ENCODE measurements at regions of chr2 and their contacts with region 1.

Region 1: DNA sequence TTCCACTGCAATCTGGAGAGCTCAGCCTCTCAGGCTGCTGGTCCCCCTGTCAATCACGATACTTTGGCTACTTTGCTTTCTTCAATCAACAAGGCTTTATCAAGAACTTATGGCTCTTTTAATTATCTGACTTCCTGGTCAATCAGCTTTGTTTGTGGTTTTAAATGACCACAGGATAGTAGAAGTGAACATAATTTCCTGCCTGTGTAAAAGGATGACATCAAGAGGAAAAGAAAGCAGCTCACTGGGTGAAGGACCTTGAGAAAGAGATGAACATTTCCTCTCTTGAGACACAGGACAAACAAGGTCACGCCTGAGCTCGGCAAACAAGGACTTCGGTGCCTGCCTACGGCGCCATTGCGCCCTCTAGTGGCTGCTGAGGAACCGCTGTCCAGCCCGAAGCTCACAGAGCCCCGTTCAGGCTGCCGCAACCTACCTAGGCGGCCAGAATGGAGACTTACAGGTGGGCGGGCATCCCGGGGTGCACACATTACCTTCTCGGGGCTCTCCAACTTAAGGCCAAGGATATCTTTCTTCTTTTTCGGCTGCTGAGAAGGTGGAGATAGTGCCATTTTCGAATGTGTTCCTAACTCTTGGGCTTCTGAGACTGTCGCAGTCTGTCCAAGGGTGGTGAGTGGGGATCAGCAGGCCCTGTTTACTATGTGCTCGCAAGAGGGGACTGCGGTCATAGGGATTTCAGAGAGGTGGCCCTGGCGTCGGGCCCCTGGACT is 54.0 kb downstream of the IL1RL2 start:
- DNase-seq: peak; percentile 94
- ATAC-seq: peak; percentile 94
- H3K4me3 Mint-ChIP-seq: peak overlapping the region; percentile 15
- H3K27ac Mint-ChIP-seq: peak overlapping the region; percentile 84
- H3K4me1 Mint-ChIP-seq: peaks cover 42% of the 10 kb centered on the region
- H3K27me3 Mint-ChIP-seq: no peaks in the 10 kb centered on the region

Region 2: GRCh38 chr2:101251844-101252407 is 988.9 kb before region 1 on chr2:
- CTCF ChIA-PET with region 1: no interaction called
- POLR2A ChIA-PET with region 1: no interaction called
- intact Hi-C with region 1: no loop called
- DNase-seq: peak; percentile 36
- ATAC-seq: peak; percentile 50
- H3K4me3 Mint-ChIP-seq: peak overlapping the region; percentile 90
- H3K27ac Mint-ChIP-seq: peak overlapping the region; percentile 88
- H3K4me1 Mint-ChIP-seq: peaks cover 38% of the 10 kb centered on the region
- H3K27me3 Mint-ChIP-seq: no peaks in the 10 kb centered on the region

Region 3: DNA sequence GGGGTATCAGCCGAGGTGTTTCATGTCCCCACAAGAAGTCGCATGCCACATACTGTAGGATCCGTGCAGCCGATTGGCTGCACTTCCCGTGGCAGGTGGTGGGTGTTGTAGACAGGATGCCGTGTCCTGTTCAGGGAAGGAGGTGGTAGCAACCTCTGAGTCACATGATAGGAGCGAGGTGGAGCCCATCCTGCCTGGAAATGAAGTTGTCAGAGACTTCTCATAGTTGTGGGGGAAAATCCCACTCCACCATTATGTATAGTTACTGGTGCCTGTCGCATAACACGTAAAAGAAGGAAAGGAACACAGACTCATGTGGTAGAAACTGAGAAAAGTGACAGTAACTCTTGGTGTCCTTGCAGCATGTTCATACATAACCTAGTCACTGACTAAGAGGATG is 340.4 kb before region 1 on chr2:
- CTCF ChIA-PET with region 1: interaction called, 11 read pairs
- POLR2A ChIA-PET with region 1: no interaction called
- intact Hi-C with region 1: no loop called
- DNase-seq: peak; percentile 82
- ATAC-seq: peak; percentile 93
- H3K4me3 Mint-ChIP-seq: peak overlapping the region; percentile 24
- H3K27ac Mint-ChIP-seq: peak overlapping the region; percentile 90
- H3K4me1 Mint-ChIP-seq: peaks cover 38% of the 10 kb centered on the region
- H3K27me3 Mint-ChIP-seq: peaks cover 10% of the 10 kb centered on the region

Region 4: GRCh38 chr2:102033031-102033749 is 207.6 kb before region 1 on chr2:
- CTCF ChIA-PET with region 1: interaction called, 14 read pairs
- POLR2A ChIA-PET with region 1: no interaction called
- intact Hi-C with region 1: no loop called
- DNase-seq: peak; percentile 41
- ATAC-seq: peak; percentile 66
- H3K4me3 Mint-ChIP-seq: no peak overlapping the region
- H3K27ac Mint-ChIP-seq: peak overlapping the region; percentile 62
- H3K4me1 Mint-ChIP-seq: peaks cover 40% of the 10 kb centered on the region
- H3K27me3 Mint-ChIP-seq: no peaks in the 10 kb centered on the region

Region 5: DNA sequence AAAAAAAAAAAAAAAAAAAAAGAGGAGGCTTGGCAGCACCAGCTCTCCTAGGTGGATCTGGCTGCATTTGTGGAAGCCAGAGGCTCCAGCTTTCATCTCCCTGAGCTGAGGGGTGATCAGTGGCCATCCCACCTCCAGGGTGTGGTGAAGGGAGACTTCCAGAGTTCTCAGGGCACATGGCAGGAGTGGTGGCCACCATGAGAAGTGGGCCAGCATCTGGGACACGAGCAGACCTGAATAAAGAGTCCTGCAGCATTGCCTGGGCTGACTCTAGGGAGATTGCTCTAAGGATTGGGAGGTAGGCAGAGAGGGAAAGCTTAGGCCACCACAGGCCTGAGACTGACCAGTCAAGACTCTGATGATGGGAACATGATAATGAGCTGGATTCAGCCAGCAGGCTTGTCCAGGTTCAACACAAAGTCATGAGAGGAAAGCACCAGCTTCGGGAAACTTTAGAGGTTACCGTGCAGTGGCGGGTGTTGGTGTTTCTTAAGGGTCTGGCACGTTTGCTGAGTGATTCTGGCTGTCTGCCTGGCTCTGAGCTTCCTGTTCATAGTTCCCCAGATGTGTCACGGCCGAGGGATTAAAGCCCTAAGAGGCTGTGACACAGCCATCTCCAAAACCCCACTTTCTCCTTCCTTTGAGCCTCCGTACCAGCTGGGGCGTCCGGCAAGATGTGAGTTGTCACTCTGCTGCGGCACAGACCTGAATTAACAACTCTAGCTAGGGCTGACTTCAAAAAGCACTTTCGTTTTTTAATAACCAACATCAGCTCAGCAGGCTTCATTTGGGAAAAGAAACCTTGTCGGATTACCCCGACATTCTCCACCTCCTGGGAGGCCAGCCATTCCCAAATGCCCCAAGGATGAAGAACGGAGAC is 136.6 kb before region 1 on chr2:
- CTCF ChIA-PET with region 1: interaction called, 11 read pairs
- POLR2A ChIA-PET with region 1: interaction called, 3 read pairs
- intact Hi-C with region 1: no loop called
- DNase-seq: peak; percentile 92
- ATAC-seq: peak; percentile 78
- H3K4me3 Mint-ChIP-seq: peak overlapping the region; percentile 80
- H3K27ac Mint-ChIP-seq: peak overlapping the region; percentile 84
- H3K4me1 Mint-ChIP-seq: peaks cover 59% of the 10 kb centered on the region
- H3K27me3 Mint-ChIP-seq: peaks cover 11% of the 10 kb centered on the region

Region 6: GRCh38 chr2:102166189-102166845 is 74.5 kb before region 1 on chr2:
- CTCF ChIA-PET with region 1: interaction called, 12 read pairs
- POLR2A ChIA-PET with region 1: no interaction called
- intact Hi-C with region 1: no loop called
- DNase-seq: no peak
- ATAC-seq: peak; percentile 47
- H3K4me3 Mint-ChIP-seq: no peak overlapping the region
- H3K27ac Mint-ChIP-seq: no peak overlapping the region
- H3K4me1 Mint-ChIP-seq: peaks cover 9% of the 10 kb centered on the region
- H3K27me3 Mint-ChIP-seq: no peaks in the 10 kb centered on the region

Region 7: DNA sequence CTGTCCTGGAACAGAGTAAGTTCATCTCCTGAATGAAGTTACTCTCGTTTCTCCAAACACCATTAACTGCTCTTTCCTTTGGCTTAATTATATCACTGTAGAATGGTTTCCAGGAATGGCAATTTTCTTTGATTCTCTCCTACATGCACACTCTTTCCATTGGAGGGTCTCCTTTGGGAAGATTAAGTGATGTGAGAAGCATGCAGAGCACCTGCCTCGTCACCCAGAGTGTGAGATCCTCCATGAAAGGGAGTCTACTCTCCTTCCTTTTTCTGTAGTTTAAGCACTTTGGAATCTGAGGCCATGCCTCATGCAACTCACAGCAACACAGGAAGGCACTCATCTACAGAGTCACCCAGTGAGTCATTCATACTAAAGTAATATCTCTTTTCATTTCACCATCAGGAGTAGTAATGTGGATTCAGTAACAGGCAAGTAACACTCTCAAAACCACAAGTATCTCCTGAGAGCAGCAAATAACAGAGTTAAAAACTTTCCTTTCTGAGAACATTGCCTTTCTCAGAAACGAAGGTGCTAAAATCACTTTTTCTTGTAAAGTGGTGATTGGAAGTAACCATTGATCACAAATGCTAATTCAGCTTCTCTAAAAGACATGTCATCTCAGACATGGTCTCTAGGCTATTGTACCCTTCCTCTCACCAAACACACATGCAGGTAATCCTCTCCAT is 17.7 kb after region 1 on chr2:
- CTCF ChIA-PET with region 1: interaction called, 16 read pairs
- POLR2A ChIA-PET with region 1: no interaction called
- intact Hi-C with region 1: no loop called
- DNase-seq: peak; percentile 63
- ATAC-seq: peak; percentile 92
- H3K4me3 Mint-ChIP-seq: peak overlapping the region; percentile 26
- H3K27ac Mint-ChIP-seq: peak overlapping the region; percentile 97
- H3K4me1 Mint-ChIP-seq: peaks cover 45% of the 10 kb centered on the region
- H3K27me3 Mint-ChIP-seq: no peaks in the 10 kb centered on the region

Measured in activated CD4-positive, alpha-beta T cell treated with anti-CD3 and anti-CD28 coated beads for 36 hours (primary cell).